ENCODE measurements at regions of chr3 and their contacts with region 1.

Region 1: DNA sequence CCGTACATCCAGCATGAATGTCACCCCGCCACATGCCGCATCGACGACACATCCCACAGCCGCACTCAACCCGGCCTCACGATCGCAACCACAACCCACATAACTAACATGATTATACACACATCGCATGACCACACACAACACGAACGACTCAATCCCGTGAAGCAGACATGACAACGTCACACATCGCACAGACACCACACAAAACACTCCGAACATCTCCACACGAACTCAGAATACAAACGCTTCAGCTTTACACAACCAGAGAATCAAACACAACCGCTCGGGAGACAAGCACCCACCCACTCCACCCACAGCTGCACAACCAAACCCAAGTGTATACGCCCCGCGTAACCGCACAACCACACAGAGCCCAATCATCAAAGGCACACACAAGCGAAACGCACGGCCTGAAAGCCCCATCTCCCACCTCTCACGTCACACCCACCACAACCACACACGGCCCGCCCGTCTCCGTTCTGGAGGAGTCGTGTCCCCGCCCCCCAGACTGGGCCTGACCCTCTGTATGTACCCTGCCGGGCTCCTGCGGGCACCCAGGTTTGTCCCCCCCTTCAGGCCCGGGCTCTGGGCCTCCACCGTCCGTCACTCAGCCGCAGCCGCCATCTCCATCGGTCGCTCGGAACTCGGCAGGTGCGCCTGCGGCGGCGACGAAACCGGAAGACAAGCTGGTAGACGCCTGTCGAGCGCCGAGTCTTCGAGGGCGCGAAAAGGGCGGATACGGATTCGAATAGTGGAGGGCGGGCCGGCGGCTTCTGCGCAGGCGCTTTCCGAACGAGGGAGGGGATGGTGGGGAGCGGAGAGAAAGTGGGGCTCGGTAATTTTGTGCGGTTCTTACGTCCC is at the start of gene RBSN:
- DNase-seq: peak; percentile 92 to 93
- ATAC-seq: peak; percentile 55 to 69
- H3K4me3 ChIP-seq: peak within 1 kb of the TSS; percentile 62 to 99 (median 93)
- H3K27ac ChIP-seq: peak within 1 kb of the TSS; percentile 87 to 96 (median 88)
- H3K4me1 ChIP-seq: peaks cover 36 to 40% of the 10 kb centered on the region in 2 donors
- H3K27me3 ChIP-seq: no peaks in the 10 kb centered on the region
- CTCF ChIP-seq: no peak
- POLR2A ChIP-seq: peak; percentile 86 to 94
- total RNA-seq, gene RBSN: 26.8 to 42.6 (median 28.6) TPM

Region 2: GRCh38 chr3:14947886-14948555 is 150.7 kb before region 1 on chr3:
- in situ Hi-C with region 1: no loop called
- intact Hi-C with region 1: loop called (anchors 1 kb)
- DNase-seq: peak; percentile 97
- ATAC-seq: peak; percentile 86 to 88
- H3K4me3 ChIP-seq: peak overlapping the region; percentile 66 to 98 (median 80)
- H3K27ac ChIP-seq: peak overlapping the region; percentile 96 to 99 (median 99)
- H3K4me1 ChIP-seq: peaks cover 34 to 42% of the 10 kb centered on the region in 2 donors
- H3K27me3 ChIP-seq: no peaks in the 10 kb centered on the region
- CTCF ChIP-seq: peak in 1 of 5 experiments; percentile 16
- POLR2A ChIP-seq: peak in 1 of 2 donors; percentile 1

Region 3: GRCh38 chr3:15064835-15065549 is 33.7 kb before region 1 on chr3 and contains the start of gene MRPS25:
- in situ Hi-C with region 1: no loop called
- intact Hi-C with region 1: loop called (anchors 1 kb)
- DNase-seq: peak; percentile 87 to 91
- ATAC-seq: peak; percentile 93 to 94
- H3K4me3 ChIP-seq: peak within 1 kb of the TSS; percentile 74 to 99 (median 85)
- H3K27ac ChIP-seq: peak within 1 kb of the TSS; percentile 83 to 97 (median 94)
- H3K4me1 ChIP-seq: peaks cover 18 to 20% of the 10 kb centered on the region in 2 donors
- H3K27me3 ChIP-seq: no peaks in the 10 kb centered on the region
- CTCF ChIP-seq: no peak
- POLR2A ChIP-seq: peak; percentile 94
- total RNA-seq, gene MRPS25: 71.4 to 88.6 (median 73.9) TPM

Region 4: DNA sequence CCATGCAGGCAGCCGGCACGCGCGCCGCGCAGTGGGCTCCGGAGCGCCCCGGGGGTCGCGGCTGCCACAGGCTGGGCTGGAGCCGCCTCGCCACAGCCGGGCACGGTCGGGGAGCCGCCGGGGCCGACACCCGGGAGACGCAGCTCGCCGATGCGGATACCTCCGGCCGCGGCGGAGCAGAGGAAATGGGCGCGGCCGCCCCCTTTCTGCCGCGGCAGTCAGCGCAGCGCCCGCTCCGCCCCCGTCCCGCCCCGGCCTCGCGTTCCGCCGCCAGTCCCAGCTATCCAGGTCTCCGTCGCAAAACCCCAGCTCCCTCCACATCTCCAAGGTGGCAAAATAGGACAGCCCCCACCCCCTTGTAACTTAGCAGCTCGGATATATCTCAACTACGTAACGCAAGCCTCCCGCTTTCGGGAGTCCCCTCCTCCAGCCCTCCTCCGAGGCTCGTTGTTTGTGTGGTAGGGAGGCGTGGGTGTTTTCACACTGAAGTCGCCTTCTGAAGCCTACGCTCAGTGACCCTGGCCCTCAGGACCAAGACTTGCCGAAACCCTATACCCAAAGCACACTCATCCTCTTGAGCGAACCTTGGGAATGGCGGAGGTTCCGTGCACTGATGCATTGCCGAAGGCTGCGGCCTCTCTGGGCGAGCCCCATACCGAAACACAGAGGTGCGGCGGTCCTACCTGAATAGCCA is 233.8 kb after region 1 on chr3 and contains the start of gene SH3BP5:
- in situ Hi-C with region 1: no loop called
- intact Hi-C with region 1: loop called (anchors 5 kb)
- DNase-seq: peak; percentile 52 to 66
- ATAC-seq: peak; percentile 63 to 66
- H3K4me3 ChIP-seq: peak within 1 kb of the TSS; percentile 92 to 97 (median 93)
- H3K27ac ChIP-seq: peak within 1 kb of the TSS; percentile 88 to 93 (median 91)
- H3K4me1 ChIP-seq: peaks cover 38 to 40% of the 10 kb centered on the region in 2 donors
- H3K27me3 ChIP-seq: no peaks in the 10 kb centered on the region
- CTCF ChIP-seq: peak; percentile 73 to 95 (median 91)
- POLR2A ChIP-seq: peak; percentile 89 to 91
- total RNA-seq, gene SH3BP5: 31.5 to 111 (median 75.5) TPM

Region 5: GRCh38 chr3:16697443-16698147 is 1598.9 kb after region 1 on chr3:
- in situ Hi-C with region 1: no loop called
- intact Hi-C with region 1: no loop called
- DNase-seq: no peak
- ATAC-seq: peak in 1 of 2 donors; percentile 49
- H3K4me3 ChIP-seq: no peak overlapping the region
- H3K27ac ChIP-seq: no peak overlapping the region
- H3K4me1 ChIP-seq: peaks cover 0 to 3% of the 10 kb centered on the region in 2 donors
- H3K27me3 ChIP-seq: no peaks in the 10 kb centered on the region
- CTCF ChIP-seq: no peak
- POLR2A ChIP-seq: no peak